ENCODE measurements at regions of chr13 and their contacts with region 1.

Region 1: GRCh38 chr13:31161828-31162590 is at the start of gene HSPH1:
- DNase-seq: peak; percentile 95 to 100 (median 99)
- ATAC-seq: peak; percentile 83 to 84
- H3K4me3 Mint-ChIP-seq: peak within 1 kb of the TSS; percentile 94 to 100 (median 97)
- H3K27ac Mint-ChIP-seq: peak within 1 kb of the TSS; percentile 96 to 100 (median 99)
- H3K4me1 Mint-ChIP-seq: peaks cover 20 to 54% (median 45%) of the 10 kb centered on the region in 4 donors
- H3K27me3 Mint-ChIP-seq: no peaks in the 10 kb centered on the region
- polyA plus RNA-seq, gene HSPH1: 36.2 to 66.8 (median 52.5) TPM

Region 2: DNA sequence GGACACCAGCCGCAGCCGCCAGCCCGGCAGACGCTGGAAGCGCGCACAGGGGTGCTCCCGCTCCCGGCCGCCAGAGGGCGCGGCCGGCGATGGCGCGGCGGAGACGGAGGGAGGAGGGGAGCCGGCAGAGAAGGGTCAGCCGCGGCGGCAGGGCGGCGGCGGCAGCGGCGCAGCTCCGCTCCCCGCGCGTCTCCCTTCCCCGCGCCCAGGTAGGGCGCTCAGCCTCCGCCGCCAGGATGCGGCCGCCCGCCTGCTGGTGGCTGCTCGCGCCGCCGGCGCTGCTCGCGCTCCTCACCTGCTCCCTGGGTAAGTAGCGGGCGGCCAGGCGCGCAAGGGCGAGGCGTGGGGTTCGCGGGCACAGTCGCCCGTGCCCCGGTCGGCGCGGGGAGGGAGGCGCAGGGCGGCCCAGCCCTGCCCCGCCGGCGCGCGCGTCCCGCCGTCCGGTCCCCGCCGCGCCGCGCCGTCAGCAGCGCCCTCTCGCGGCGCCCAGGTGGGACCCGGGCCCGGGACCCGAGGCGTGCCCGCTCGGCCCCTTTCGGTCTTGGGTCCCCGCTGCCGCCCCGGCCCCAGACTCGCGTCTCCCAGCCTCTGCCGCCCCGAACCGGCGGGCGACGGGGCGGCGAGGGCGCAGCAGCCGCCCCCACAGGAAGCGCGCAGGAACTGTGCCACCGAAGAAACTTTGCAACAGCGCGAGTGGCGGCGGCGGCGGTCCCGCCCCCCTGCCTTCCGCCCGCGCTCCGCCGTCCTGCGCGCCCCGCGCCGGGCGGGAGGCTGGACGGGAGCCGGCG is 38.0 kb after region 1 on chr13 and contains the start of gene B3GLCT:
- POLR2A ChIA-PET with region 1: interaction called, 13 read pairs
- DNase-seq: peak; percentile 65 to 88 (median 82)
- ATAC-seq: peak; percentile 71 to 78
- H3K4me3 Mint-ChIP-seq: peak within 1 kb of the TSS; percentile 78 to 92 (median 87)
- H3K27ac Mint-ChIP-seq: peak within 1 kb of the TSS; percentile 86 to 98 (median 92)
- H3K4me1 Mint-ChIP-seq: peaks cover 13 to 33% (median 23%) of the 10 kb centered on the region in 4 donors
- H3K27me3 Mint-ChIP-seq: no peaks in the 10 kb centered on the region
- polyA plus RNA-seq, gene B3GLCT: 6.3 to 7.4 (median 7.2) TPM

Measured in naive thymus-derived CD8-positive, alpha-beta T cell (primary cell).